Posterior vena cava (tissue), 2 donors: ENCODE measurements at regions of chr6 and their contacts with region 1.

Region 1: DNA sequence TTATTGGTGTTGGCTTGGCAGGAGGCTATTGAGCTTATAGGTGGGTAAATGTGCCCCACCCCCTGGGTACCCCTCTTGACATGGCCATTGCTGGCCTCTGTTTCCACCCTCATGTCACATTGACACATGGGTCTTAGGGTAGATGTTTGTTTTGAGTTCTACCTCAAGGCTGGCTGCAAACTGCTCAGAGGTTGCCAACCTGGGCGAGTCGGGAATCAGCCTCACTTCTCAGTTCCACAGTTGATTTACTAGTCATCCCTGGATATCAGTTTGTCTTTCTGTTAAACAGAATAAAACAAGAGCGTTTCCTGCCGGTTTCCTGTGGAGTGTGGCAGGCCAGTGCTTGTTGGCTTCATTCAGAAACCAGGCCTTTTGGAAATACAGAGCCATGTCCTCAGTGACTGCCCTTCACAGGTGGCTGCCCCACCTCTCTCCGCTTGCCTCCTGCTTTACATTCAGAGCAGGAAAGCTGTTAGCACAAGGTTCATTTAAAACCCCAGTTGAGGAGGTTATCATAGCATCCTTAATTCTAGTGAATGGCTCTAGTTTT is 105.6 kb downstream of the TCP11 start:
- DNase-seq: no peak

Region 2: GRCh38 chr6:35078226-35078850 is 42.8 kb after region 1 on chr6:
- intact Hi-C with region 1: loop called in 1 of 2 experiments (anchors 1 kb)
- DNase-seq: peak; percentile 75